Prostate gland (tissue), 2 donors: ENCODE measurements at regions of chr5 and their contacts with region 1.

Region 1: GRCh38 chr5:137833463-137833862 is 34.2 kb upstream of the MYOT start:
- DNase-seq: peak; percentile 74
- H3K4me3 ChIP-seq: no peak overlapping the region
- H3K27ac ChIP-seq: peak overlapping the region in 1 of 2 donors; percentile 24
- H3K4me1 ChIP-seq: no peaks in the 10 kb centered on the region
- H3K27me3 ChIP-seq: no peaks in the 10 kb centered on the region
- CTCF ChIP-seq: no peak
- POLR2A ChIP-seq: no peak

Region 2: GRCh38 chr5:137880313-137880712 is 46.9 kb after region 1 on chr5:
- intact Hi-C with region 1: loop called (anchors 5 kb)
- DNase-seq: no peak
- H3K4me3 ChIP-seq: no peak overlapping the region
- H3K27ac ChIP-seq: no peak overlapping the region
- H3K4me1 ChIP-seq: no peaks in the 10 kb centered on the region
- H3K27me3 ChIP-seq: no peaks in the 10 kb centered on the region
- CTCF ChIP-seq: no peak
- POLR2A ChIP-seq: no peak

Region 3: DNA sequence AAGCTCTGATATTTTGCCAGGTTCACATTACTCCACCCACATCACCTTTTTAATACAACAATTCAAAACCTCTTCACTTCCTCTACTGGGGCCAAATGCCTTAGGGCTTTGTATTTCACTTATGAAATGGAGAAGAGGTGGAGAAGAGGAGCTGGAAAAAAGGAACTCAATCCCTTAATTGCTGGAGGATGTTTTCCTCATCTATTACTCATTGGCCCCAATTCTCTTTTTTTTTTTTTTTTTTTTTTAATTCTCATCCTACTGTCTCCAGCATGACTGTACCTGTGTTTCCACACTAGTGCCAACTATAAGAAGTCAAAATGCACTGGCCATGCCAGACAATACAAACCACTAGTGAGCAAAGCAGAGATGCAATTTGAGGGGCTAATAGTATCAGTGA is 178.5 kb after region 1 on chr5:
- intact Hi-C with region 1: no loop called
- DNase-seq: no peak
- H3K4me3 ChIP-seq: no peak overlapping the region
- H3K27ac ChIP-seq: no peak overlapping the region
- H3K4me1 ChIP-seq: no peaks in the 10 kb centered on the region
- H3K27me3 ChIP-seq: no peaks in the 10 kb centered on the region
- CTCF ChIP-seq: no peak
- POLR2A ChIP-seq: no peak

Region 4: GRCh38 chr5:138035605-138036537 is 202.4 kb after region 1 on chr5:
- intact Hi-C with region 1: loop called (anchors 5 kb)
- DNase-seq: peak; percentile 15
- H3K4me3 ChIP-seq: no peak overlapping the region
- H3K27ac ChIP-seq: no peak overlapping the region
- H3K4me1 ChIP-seq: no peaks in the 10 kb centered on the region
- H3K27me3 ChIP-seq: no peaks in the 10 kb centered on the region
- CTCF ChIP-seq: peak; percentile 50 to 85 (median 81)
- POLR2A ChIP-seq: no peak